OCI-LY7 (cell line): ENCODE measurements at regions of chr2 and their contacts with region 1.

Region 1: DNA sequence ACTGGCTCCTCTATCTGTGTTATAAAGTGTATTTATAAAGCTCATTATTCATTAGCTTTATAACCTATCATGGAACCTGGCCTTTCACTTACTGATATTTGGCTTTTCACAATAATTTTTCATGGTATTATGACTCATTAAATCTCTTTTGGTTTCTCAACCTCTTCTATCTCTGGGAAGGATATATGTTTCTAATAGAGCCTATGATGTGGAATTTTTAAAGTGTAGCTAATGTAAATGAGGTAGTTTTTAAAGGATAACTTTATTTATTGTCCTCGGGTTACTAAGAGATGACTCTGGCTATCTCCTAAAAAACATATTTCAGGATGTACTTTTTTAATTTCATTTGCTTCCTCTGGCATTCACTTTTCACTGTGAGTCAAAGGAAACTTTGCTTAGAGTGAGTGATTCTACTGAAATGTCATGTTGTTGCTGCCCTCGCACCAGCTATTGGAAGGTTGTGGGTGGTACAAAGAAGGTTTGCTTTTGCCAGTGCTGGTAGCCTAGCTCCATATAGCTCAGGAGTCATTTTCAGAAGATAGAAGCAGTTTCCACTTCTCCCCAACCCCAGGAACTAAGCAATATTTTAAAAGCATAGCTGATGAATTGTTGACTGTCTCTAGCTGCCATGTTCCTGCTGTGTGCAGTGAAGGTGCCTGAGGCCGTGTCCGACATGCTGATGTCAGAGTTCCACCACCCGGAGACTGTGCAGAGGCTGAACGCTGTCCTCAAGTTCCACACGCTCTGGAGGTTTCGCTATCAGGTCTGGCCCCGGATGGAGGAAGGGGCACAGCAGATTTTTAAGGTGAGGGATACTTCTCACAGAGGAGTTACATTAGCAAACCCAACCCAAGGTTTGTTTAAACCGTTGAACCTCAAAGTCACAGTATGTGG is 85.0 kb upstream of the RPE start:
- DNase-seq: no peak
- H3K4me3 ChIP-seq: no peak overlapping the region
- H3K27ac ChIP-seq: no peak overlapping the region
- H3K4me1 ChIP-seq: no peaks in the 10 kb centered on the region
- CTCF ChIP-seq: no peak

Region 2: DNA sequence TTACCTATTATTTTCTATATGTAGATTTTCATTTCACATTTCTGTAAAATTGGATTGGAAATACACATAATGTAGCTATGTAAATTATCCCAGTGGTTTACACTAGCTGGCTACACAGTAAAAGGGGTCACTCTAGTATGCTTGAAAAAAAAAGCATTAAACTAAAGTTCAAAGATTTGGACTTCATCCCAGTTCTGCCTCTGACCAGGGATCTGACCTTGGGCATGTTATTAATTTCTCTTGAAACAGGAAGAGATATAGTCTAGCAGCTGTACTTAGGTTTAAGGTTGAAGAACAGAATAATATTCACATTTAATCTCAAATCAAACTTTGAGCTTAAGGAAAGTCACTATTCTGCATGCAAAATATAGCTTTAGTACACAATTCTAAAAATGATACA is 20.5 kb after region 1 on chr2:
- CTCF ChIA-PET with region 1: no interaction called
- POLR2A ChIA-PET with region 1: interaction called, 11 read pairs
- intact Hi-C with region 1: no loop called
- DNase-seq: no peak
- H3K4me3 ChIP-seq: no peak overlapping the region
- H3K27ac ChIP-seq: no peak overlapping the region
- H3K4me1 ChIP-seq: no peaks in the 10 kb centered on the region
- CTCF ChIP-seq: no peak

Region 3: DNA sequence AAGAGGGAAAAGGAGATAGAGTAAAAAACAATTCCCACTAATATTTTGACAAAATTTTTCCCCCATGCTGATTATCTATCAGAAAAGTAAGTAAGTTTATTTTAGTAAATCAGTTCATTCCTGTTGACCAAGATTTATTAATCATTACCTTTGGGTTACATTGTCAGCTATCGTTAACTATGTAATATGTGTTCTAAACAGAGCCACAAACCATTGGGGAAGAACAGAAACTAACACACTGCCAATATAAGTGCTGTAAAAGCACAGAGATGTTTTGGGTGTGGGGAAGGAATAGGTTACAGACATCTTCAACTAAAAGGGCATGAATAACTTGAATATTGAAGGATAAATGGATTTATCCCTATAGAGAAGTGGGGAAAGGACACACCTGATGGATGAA is 350.3 kb after region 1 on chr2:
- CTCF ChIA-PET with region 1: no interaction called
- POLR2A ChIA-PET with region 1: no interaction called
- intact Hi-C with region 1: no loop called
- DNase-seq: no peak
- H3K4me3 ChIP-seq: no peak overlapping the region
- H3K27ac ChIP-seq: no peak overlapping the region
- H3K4me1 ChIP-seq: no peaks in the 10 kb centered on the region
- CTCF ChIP-seq: no peak